ENCODE measurements at regions of chr3 and their contacts with region 1.

Region 1: GRCh38 chr3:4712143-4712542 is 219.0 kb downstream of the ITPR1 start:
- DNase-seq: no peak
- ATAC-seq: no peak
- H3K4me3 Mint-ChIP-seq: no peak overlapping the region
- H3K27ac Mint-ChIP-seq: no peak overlapping the region
- H3K4me1 Mint-ChIP-seq: peaks cover 11% of the 10 kb centered on the region
- H3K27me3 Mint-ChIP-seq: no peaks in the 10 kb centered on the region
- CTCF ChIP-seq: no peak

Region 2: GRCh38 chr3:4633078-4634004 is 78.8 kb before region 1 on chr3:
- CTCF ChIA-PET with region 1: no interaction called
- POLR2A ChIA-PET with region 1: no interaction called
- intact Hi-C with region 1: no loop called
- DNase-seq: no peak
- ATAC-seq: peak; percentile 65
- H3K4me3 Mint-ChIP-seq: no peak overlapping the region
- H3K27ac Mint-ChIP-seq: peak overlapping the region; percentile 36
- H3K4me1 Mint-ChIP-seq: peaks cover 7% of the 10 kb centered on the region
- H3K27me3 Mint-ChIP-seq: no peaks in the 10 kb centered on the region
- CTCF ChIP-seq: peak; percentile 95

Region 3: DNA sequence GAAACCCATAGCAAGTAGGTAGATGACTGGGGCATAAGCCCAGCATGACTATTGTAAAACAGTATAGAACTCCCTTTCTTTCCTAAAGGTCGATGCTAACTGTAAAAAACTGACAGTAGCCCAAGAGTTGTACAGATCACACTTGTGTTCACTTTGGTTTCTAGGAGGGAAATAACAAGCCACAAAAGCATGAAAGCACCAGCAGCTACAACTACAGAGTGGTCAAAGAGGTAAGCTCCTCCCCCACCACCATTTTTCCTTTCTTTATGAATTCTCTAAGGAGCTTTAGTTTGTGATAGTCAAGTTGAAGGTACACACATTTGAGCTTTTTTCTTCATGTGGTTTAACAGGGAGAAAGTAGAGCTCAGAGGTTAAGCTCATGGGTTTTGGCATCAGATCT is 28.0 kb before region 1 on chr3:
- CTCF ChIA-PET with region 1: interaction called, 11 read pairs
- POLR2A ChIA-PET with region 1: no interaction called
- intact Hi-C with region 1: no loop called
- DNase-seq: no peak
- ATAC-seq: no peak
- H3K4me3 Mint-ChIP-seq: no peak overlapping the region
- H3K27ac Mint-ChIP-seq: no peak overlapping the region
- H3K4me1 Mint-ChIP-seq: no peaks in the 10 kb centered on the region
- H3K27me3 Mint-ChIP-seq: no peaks in the 10 kb centered on the region
- CTCF ChIP-seq: no peak

Region 4: GRCh38 chr3:4741404-4742307 is 29.5 kb after region 1 on chr3:
- CTCF ChIA-PET with region 1: interaction called, 16 read pairs
- POLR2A ChIA-PET with region 1: no interaction called
- intact Hi-C with region 1: no loop called
- DNase-seq: peak; percentile 24
- ATAC-seq: peak; percentile 2
- H3K4me3 Mint-ChIP-seq: no peak overlapping the region
- H3K27ac Mint-ChIP-seq: peak overlapping the region; percentile 91
- H3K4me1 Mint-ChIP-seq: peaks cover 54% of the 10 kb centered on the region
- H3K27me3 Mint-ChIP-seq: no peaks in the 10 kb centered on the region
- CTCF ChIP-seq: no peak

Region 5: DNA sequence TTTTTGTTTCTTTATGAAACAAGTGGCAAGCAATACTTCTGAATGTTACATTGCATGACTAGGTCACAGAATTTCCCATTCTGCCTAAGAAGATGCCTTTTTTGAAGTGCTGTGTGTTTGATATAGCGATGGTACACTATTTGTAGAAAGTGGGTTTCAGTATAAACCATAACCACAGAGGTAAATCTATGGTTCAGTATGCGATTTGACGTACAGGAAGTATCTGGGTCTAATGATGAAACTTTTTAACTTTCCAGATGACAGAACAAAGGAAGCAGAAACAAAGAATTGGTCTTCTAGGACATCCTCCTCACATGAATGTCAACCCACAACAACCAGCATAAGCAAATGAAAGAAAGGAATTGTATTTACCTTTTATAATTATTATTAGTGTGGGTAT is 133.7 kb after region 1 on chr3:
- CTCF ChIA-PET with region 1: interaction called, 10 read pairs
- POLR2A ChIA-PET with region 1: interaction called, 3 read pairs
- intact Hi-C with region 1: no loop called
- DNase-seq: no peak
- ATAC-seq: peak; percentile 56
- H3K4me3 Mint-ChIP-seq: peak overlapping the region; percentile 3
- H3K27ac Mint-ChIP-seq: peak overlapping the region; percentile 99
- H3K4me1 Mint-ChIP-seq: peaks cover 99% of the 10 kb centered on the region
- H3K27me3 Mint-ChIP-seq: no peaks in the 10 kb centered on the region
- CTCF ChIP-seq: no peak

Region 6: DNA sequence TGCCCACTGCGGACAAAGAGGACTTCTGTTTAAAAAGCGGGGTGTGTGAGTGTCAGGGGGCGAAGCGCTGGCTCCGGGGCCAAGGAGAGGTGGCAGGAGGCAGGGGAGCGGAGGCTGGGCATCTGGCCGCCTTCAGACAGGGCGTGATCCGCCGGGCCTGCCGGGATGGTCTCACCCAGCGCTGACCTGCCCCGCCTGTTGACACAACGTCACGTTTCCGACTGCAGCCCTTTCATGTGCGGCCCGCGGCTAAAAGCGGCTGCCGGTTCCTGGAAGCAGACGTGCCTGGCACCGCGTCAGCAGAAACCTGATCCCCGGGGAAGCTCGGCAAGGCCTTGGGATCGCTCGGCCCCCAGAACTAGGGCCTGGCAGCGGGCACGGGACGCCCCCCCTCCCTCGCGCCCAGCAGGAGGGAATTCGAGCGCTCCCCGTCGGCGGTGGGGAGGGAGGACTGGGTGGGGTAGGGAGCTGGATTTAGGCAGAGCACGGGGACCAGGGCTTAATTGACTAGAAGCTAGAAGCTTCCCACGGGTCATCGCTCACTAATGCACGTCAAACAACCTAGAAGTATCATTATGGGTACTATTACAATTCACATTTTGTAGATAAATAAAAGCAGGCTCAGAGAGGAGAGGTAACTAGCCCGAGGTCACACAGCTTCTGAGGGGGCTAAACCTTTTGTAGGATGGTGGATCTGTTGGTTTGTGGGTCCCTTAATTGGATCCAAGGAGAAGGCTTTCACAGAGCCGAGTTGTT is 274.8 kb after region 1 on chr3:
- CTCF ChIA-PET with region 1: interaction called, 148 read pairs
- POLR2A ChIA-PET with region 1: interaction called, 11 read pairs
- intact Hi-C with region 1: no loop called
- DNase-seq: peak; percentile 91
- ATAC-seq: peak; percentile 67
- H3K4me3 Mint-ChIP-seq: peak overlapping the region; percentile 92
- H3K27ac Mint-ChIP-seq: peak overlapping the region; percentile 88
- H3K4me1 Mint-ChIP-seq: peaks cover 63% of the 10 kb centered on the region
- H3K27me3 Mint-ChIP-seq: no peaks in the 10 kb centered on the region
- CTCF ChIP-seq: no peak

Region 7: GRCh38 chr3:5041315-5041714 is 329.2 kb after region 1 on chr3:
- CTCF ChIA-PET with region 1: interaction called, 22 read pairs
- POLR2A ChIA-PET with region 1: no interaction called
- intact Hi-C with region 1: no loop called
- DNase-seq: no peak
- ATAC-seq: no peak
- H3K4me3 Mint-ChIP-seq: no peak overlapping the region
- H3K27ac Mint-ChIP-seq: no peak overlapping the region
- H3K4me1 Mint-ChIP-seq: peaks cover 26% of the 10 kb centered on the region
- H3K27me3 Mint-ChIP-seq: peaks cover 1% of the 10 kb centered on the region
- CTCF ChIP-seq: no peak

Measured in activated CD8-positive, alpha-beta T cell treated with anti-CD3 and anti-CD28 coated beads for 36 hours (primary cell).